ENCODE measurements at regions of chr3 and their contacts with region 1.

Region 1: GRCh38 chr3:180802837-180803236 is 109.6 kb upstream of the FXR1 start:
- DNase-seq: peak; percentile 3
- ATAC-seq: peak; percentile 49; the same call in 1 of the 2 replicates
- H3K4me3 ChIP-seq: no peak overlapping the region
- H3K27ac ChIP-seq: no peak overlapping the region
- H3K4me1 ChIP-seq: no peaks in the 10 kb centered on the region
- H3K27me3 ChIP-seq: peaks cover 16% of the 10 kb centered on the region; the same call in 1 of the 2 replicates
- CTCF ChIP-seq: peak; percentile 39 to 51 (median 48); a peak in 5 of 6 replicates
- POLR2A ChIP-seq: no peak
- RAD21 ChIP-seq: peak; percentile 69

Region 2: DNA sequence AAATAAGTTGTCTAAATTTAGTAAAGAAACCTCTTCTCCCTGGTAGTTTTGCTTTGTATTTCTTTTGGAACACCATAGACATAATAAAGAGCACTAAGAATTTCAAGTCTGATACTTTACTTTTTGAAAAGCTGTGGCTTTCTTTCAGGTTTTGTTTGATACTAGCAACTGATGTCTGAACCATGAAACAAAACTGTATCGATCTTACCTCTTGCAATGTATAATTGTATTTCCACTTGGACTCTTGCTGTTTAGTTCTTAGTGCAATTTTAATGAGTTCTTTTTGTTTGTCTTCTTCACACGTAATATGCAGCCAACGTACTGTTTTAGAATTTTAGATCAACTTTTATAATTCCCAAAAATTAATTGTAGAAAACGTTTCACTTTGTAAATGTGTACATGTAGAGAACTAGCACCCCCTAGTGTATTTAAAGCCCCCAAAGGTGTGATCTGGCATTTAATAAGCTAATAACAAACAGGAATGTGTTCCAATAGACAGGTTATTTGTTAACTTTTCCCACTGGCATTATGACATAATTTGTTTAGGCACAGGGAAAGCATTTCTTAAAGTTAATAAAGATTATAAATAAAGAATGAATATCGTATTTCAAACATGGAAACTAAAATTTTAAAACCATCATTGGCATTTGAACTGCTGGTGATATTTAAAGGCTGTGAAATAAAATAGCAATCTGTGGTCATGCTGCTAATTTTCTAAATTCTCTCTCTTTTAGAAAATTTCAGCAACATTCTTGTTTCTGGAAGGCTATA is 475.8 kb after region 1 on chr3:
- CTCF ChIA-PET with region 1: interaction called, 8 read pairs
- POLR2A ChIA-PET with region 1: no interaction called
- RAD21 ChIA-PET with region 1: no interaction called
- intact Hi-C with region 1: loop called (anchors 10 kb)
- DNase-seq: no peak
- ATAC-seq: no peak
- H3K4me3 ChIP-seq: no peak overlapping the region
- H3K27ac ChIP-seq: no peak overlapping the region
- H3K4me1 ChIP-seq: no peaks in the 10 kb centered on the region
- H3K27me3 ChIP-seq: peaks cover 49% of the 10 kb centered on the region
- CTCF ChIP-seq: peak; percentile 14 to 38 (median 16); a peak in 3 of 6 replicates
- POLR2A ChIP-seq: no peak
- RAD21 ChIP-seq: peak; percentile 50

Measured in HCT116 (cell line).